Prostate gland (tissue), 2 donors: ENCODE measurements at regions of chr1 and their contacts with region 1.

Region 1: GRCh38 chr1:91511386-91511785 is 10.7 kb downstream of the CDC7 start:
- DNase-seq: no peak
- H3K4me3 ChIP-seq: no peak overlapping the region
- H3K27ac ChIP-seq: no peak overlapping the region
- H3K4me1 ChIP-seq: no peaks in the 10 kb centered on the region
- H3K27me3 ChIP-seq: no peaks in the 10 kb centered on the region
- CTCF ChIP-seq: peak in 3 of 4 experiments; percentile 51 to 75 (median 72)
- POLR2A ChIP-seq: no peak

Region 2: DNA sequence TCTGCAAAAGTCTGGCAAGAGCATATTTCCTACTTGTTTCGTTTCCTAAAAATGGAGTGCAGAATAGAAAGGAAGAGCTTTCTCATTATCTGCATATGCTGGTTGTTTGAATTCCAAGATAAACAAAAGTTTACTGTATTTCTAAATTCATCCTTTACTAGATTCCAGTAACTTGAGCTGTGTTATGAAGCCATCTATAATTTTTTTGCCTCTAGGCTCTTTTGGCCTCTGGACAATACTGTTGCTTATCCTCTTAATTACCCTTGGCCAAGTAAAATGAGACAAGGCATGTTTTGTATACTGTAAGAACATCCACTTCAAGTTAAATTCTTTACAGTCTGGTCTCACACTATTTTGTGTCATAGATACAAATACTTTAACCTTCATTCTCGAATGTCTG is 61.1 kb before region 1 on chr1:
- intact Hi-C with region 1: no loop called
- DNase-seq: no peak
- H3K4me3 ChIP-seq: no peak overlapping the region
- H3K27ac ChIP-seq: no peak overlapping the region
- H3K4me1 ChIP-seq: no peaks in the 10 kb centered on the region
- H3K27me3 ChIP-seq: no peaks in the 10 kb centered on the region
- CTCF ChIP-seq: no peak
- POLR2A ChIP-seq: no peak

Region 3: GRCh38 chr1:91754348-91754747 is 243.0 kb after region 1 on chr1:
- intact Hi-C with region 1: no loop called
- DNase-seq: no peak
- H3K4me3 ChIP-seq: no peak overlapping the region
- H3K27ac ChIP-seq: peak overlapping the region; percentile 11 to 47
- H3K4me1 ChIP-seq: peaks cover 6% of the 10 kb centered on the region
- H3K27me3 ChIP-seq: no peaks in the 10 kb centered on the region
- CTCF ChIP-seq: no peak
- POLR2A ChIP-seq: no peak

Region 4: DNA sequence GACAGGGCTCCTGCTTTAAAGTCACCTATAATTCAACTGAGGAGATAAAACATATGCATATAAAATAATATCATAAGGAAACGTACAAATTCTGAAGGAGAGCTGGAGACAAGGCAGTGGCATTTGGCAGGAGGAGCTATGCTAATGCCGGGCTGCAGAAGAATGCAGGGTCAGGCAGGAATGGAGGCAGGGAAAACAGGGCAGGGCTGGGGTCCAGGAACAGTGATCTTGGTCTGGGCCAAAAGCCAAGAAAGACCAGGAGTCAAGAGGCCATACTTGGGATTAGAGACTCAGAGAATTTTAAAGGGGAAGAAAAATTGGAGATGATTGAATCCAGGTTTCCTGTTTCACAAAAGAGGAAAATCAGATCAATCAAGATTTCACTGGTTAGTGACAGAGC is 417.9 kb after region 1 on chr1:
- intact Hi-C with region 1: loop called (anchors 2 kb)
- DNase-seq: no peak
- H3K4me3 ChIP-seq: no peak overlapping the region
- H3K27ac ChIP-seq: no peak overlapping the region
- H3K4me1 ChIP-seq: no peaks in the 10 kb centered on the region
- H3K27me3 ChIP-seq: no peaks in the 10 kb centered on the region
- CTCF ChIP-seq: no peak
- POLR2A ChIP-seq: no peak